Activated T-helper 1 cell treated with anti-CD3 and anti-CD28 coated beads, Interleukin-12 subunit alpha, Interleukin-12 subunit beta, Interleukin-2, Interleukin-4 antibody, amounts not matched to agents 30 ng/mL and 10 ng/mL and 1 ng/mL, durations not matched to agents 14 hours and 24 hours and 36 hours (primary cell): ENCODE measurements at regions of chr20 and their contacts with region 1.

Region 1: GRCh38 chr20:62302341-62303058 is at the start of gene ADRM1:
- DNase-seq: peak; percentile 97
- H3K4me3 Mint-ChIP-seq: peak within 1 kb of the TSS; percentile 98
- H3K27ac Mint-ChIP-seq: peak within 1 kb of the TSS; percentile 100
- H3K4me1 Mint-ChIP-seq: peaks cover 28% of the 10 kb centered on the region
- H3K27me3 Mint-ChIP-seq: no peaks in the 10 kb centered on the region
- total RNA-seq, gene ADRM1: 181 and 188 TPM in 2 replicates

Region 2: DNA sequence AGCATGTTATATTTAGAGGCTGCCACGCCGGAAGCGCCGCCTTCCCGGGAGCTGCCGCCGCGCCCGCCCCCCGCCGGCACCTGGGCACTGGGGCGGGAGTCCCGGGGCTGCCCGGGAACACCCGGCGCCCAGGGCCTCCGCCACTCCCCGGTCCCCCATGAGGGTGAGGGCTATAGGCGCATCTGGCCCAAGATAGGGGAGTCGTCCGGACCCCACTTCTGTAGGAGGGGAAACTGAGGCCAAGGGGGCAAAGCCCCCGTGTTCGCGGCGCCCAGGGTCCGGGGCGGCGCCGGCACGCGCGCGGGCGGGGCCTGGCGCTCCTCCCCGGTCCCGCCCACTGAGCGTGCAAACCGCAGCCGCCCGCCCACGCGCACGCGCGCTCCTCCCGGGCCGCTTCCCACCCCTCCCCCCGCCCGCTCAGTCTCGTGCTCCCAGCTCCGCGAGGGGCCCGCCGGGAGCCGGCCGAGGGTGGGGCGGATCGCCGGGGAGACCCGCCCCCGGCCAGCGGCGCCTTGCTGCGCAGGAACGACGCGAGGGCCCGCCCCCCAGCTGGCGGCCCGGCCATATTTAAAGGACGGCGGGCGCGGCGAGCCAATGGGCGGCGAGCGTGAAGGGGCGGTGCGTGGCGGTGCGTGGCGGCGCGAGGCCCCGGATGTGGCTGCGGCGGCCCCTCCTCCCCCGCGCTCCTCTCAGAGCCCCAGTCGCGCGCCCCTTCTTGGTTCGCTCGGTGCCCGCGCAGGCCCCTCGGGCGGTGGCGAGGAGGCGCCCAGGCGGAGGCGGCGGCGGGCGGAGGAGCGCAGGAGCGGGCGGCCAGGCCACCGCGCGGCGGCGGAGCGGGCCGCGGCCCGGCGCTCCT is 180.5 kb before region 1 on chr20 and contains the start of gene LSM14B:
- intact Hi-C with region 1: loop called (anchors 1 kb)
- DNase-seq: peak; percentile 95
- H3K4me3 Mint-ChIP-seq: peak within 1 kb of the TSS; percentile 90
- H3K27ac Mint-ChIP-seq: peak within 1 kb of the TSS; percentile 94
- H3K4me1 Mint-ChIP-seq: peaks cover 32% of the 10 kb centered on the region
- H3K27me3 Mint-ChIP-seq: no peaks in the 10 kb centered on the region
- total RNA-seq, gene LSM14B: 39.6 and 43.2 TPM in 2 replicates

Region 3: DNA sequence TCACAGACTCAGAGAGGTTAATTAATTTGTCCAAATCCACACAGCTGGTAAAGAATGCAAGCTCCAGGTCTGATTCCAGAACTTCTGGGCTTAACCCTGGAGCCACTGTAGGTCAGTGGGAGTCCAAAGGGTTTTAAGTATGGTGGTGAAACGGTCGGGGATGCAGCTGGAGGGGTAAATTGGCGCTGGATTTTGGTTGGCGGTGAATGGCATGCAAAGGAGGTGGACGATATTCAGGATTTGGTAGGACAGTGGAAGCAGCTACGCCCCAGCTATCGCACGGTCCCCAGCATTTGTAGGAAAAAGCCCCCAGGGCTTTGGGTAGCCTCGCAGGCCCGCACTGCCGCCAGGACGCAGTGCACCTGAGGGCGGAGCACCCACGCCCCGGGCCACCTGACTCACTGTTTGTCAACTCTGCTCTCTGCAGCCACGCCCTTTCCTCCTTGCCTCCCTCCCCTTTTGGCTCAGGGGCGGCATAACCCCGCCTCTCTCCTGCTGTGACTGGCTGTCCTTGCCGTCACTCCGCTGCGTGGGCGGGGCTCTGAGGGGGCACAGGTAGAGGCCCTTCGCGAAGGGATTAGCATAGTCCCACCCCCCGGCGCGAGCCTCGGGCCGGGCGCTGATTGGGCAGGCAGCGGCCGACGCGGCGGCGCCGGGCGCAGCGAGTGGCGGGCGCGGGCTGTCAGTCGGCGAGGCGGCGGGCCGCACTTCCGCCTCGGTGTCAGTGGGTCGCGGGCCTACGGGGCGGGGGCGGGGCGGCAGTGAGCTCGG is 64.5 kb before region 1 on chr20 and contains the start of gene OSBPL2:
- intact Hi-C with region 1: loop called (anchors 1 kb)
- DNase-seq: peak; percentile 100
- H3K4me3 Mint-ChIP-seq: peak within 1 kb of the TSS; percentile 85
- H3K27ac Mint-ChIP-seq: peak within 1 kb of the TSS; percentile 58
- H3K4me1 Mint-ChIP-seq: peaks cover 16% of the 10 kb centered on the region
- H3K27me3 Mint-ChIP-seq: no peaks in the 10 kb centered on the region
- total RNA-seq, gene OSBPL2: 27.0 and 31.6 TPM in 2 replicates

Region 4: GRCh38 chr20:62285722-62286121 is 16.8 kb before region 1 on chr20:
- intact Hi-C with region 1: no loop called
- DNase-seq: no peak
- H3K4me3 Mint-ChIP-seq: no peak overlapping the region
- H3K27ac Mint-ChIP-seq: no peak overlapping the region
- H3K4me1 Mint-ChIP-seq: no peaks in the 10 kb centered on the region
- H3K27me3 Mint-ChIP-seq: no peaks in the 10 kb centered on the region

Region 5: DNA sequence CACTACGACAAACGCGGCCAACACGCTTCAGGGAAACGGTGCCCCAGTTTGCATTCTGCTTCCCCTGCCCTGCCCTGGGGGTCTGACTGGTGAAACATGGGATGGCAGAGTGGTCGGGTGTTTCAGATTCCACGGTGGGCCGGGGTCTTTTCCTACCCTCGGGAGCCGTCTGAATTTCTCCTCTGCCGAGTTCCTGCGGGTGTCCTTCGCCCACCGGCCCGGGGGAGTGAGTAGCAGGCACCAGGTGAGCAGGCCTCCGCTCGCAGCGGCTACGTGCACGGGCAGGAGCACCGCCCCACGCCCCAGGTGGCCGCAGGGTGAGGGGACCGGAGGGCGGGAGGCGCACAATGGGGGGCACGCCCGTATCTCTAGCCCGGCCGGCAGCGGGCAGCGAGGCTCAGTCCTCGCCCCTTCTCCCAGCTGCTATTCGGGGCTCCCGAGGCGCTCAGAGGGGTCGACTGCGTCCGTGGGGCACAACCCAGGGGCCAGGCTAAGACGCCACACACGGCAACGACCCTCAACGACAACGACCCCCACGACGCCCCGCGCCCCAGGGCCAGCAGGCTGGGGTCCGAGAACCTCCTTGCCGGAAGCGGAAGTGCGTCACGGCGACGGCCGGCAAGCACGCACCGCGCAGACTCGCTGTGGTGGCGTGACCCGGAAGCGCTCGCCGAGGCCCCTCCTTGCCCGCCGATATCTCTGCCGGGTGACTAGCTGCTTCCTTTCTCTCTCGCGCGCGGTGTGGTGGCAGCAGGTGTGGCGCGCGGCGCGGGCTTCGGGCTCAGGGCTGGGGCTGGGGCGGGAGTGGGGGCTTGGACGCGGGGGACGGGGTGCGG is 84.1 kb after region 1 on chr20 and contains the start of gene RPS21:
- intact Hi-C with region 1: loop called (anchors 1 kb)
- DNase-seq: peak; percentile 92
- H3K4me3 Mint-ChIP-seq: peak within 1 kb of the TSS; percentile 93
- H3K27ac Mint-ChIP-seq: peak within 1 kb of the TSS; percentile 87
- H3K4me1 Mint-ChIP-seq: peaks cover 39% of the 10 kb centered on the region
- H3K27me3 Mint-ChIP-seq: no peaks in the 10 kb centered on the region
- total RNA-seq, gene RPS21: 1,907 and 1,920 TPM in 2 replicates

Region 6: GRCh38 chr20:62616728-62617621 is 314.5 kb after region 1 on chr20:
- intact Hi-C with region 1: loop called (anchors 1 kb)
- DNase-seq: peak; percentile 63
- H3K4me3 Mint-ChIP-seq: peak overlapping the region; percentile 81
- H3K27ac Mint-ChIP-seq: peak overlapping the region; percentile 96
- H3K4me1 Mint-ChIP-seq: peaks cover 28% of the 10 kb centered on the region
- H3K27me3 Mint-ChIP-seq: peaks cover 9% of the 10 kb centered on the region

Region 7: GRCh38 chr20:62740286-62741141 is 438.0 kb after region 1 on chr20:
- intact Hi-C with region 1: no loop called
- DNase-seq: peak; percentile 84
- H3K4me3 Mint-ChIP-seq: peak overlapping the region; percentile 65
- H3K27ac Mint-ChIP-seq: peak overlapping the region; percentile 80
- H3K4me1 Mint-ChIP-seq: peaks cover 31% of the 10 kb centered on the region
- H3K27me3 Mint-ChIP-seq: peaks cover 15% of the 10 kb centered on the region

Region 8: GRCh38 chr20:62861726-62862336 is 559.3 kb after region 1 on chr20 and contains the start of gene TCFL5:
- intact Hi-C with region 1: loop called (anchors 2 kb)
- DNase-seq: peak; percentile 91
- H3K4me3 Mint-ChIP-seq: peak within 1 kb of the TSS; percentile 68
- H3K27ac Mint-ChIP-seq: peak within 1 kb of the TSS; percentile 34
- H3K4me1 Mint-ChIP-seq: peaks cover 6% of the 10 kb centered on the region
- H3K27me3 Mint-ChIP-seq: peaks cover 27% of the 10 kb centered on the region
- total RNA-seq, gene TCFL5: 5.7 and 5.8 TPM in 2 replicates